A549 (cell line): ENCODE measurements at regions of chr1 and their contacts with region 1.

Region 1: DNA sequence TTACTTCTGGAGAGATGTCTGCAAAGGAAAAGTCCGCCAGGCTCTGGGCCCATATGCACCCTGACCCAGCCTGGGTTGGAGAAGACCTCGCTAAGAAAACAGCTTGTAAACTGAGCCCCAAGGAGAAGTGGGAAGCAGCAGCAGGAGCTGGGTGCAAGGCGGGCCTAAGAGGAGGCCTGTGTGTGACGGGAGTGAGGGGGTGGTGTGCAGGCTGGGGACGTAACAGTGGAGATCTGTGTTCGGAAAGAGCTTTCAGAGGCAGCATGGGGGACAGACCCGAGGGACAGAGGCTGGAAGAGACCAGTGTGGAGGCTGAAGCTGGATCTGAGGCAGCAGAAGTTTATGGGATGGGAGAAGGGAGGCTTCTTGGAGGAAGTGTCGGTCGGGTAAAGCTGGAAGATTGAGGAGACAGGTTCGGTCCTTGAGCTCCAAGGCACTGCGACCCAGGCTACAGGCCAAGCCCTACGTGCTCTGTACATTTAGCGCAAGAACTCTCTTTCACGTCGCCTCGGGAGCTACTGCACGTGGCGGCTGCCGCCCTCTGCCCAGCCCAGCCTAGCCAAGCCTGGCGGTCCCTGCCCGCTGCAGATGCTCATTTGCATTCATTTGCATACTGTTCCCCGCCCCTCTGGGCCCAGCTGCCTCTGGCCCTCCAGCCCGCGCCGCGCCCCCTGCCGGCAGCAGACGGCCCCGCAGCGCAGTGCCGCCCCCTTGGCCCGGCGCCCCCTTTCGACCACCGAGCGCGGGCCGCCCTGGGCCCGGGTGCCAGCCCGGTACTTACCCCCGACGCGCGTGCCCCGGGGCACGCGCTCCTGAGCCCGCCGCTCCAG is 6.3 kb downstream of the HPCA start:
- DNase-seq: peak; percentile 44 to 51
- ATAC-seq: peak; percentile 63 to 85
- H3K4me3 ChIP-seq: peak overlapping the region; percentile 55
- H3K27ac ChIP-seq: peak overlapping the region; percentile 72 to 88
- H3K4me1 ChIP-seq: 0 out of 3 replicates have a peak, but pooled peaks cover 3% of the 10 kb centered on the region
- CTCF ChIP-seq: peak; percentile 75
- EP300 ChIP-seq: no peak
- POLR2A ChIP-seq: no peak
- RAD21 ChIP-seq: no peak

Region 2: DNA sequence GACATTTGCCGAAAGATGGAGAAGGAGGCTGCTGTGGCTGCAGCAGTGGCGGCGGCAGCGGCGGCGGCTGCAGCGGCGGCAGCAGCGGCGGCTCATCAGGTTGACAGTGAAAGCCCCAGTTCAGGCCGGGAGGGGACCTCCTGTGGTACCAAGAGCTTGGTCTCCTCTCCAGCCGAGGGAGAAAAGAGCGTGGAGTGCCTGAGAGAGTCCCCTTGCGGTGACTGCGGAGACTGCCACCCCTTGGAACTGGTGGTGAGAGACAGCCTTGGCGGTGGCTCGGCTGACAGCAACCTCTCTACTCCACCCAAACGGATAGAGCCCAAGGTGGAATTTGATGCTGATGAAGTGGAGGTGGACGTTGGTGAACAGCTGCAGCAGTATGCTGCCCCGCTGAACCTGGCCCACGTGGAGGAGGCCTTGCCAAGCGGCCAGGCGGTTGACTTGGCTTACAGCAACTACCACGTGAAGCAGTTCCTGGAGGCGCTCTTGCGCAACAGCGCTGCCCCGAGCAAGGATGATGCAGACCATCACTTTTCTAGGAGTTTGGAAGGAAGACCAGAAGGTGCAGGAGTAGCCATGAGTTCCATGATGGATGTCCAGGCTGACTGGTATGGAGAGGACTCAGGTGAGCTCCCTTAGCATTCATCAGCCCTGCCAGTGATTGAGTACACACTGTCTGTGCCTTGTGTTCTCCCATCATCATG is 421.4 kb before region 1 on chr1:
- CTCF ChIA-PET with region 1: no interaction called
- POLR2A ChIA-PET with region 1: no interaction called
- DNase-seq: no peak
- ATAC-seq: peak in 1 of 2 experiments; percentile 36; a peak in 2 of 6 replicates
- H3K4me3 ChIP-seq: no peak overlapping the region
- H3K27ac ChIP-seq: no peak overlapping the region
- H3K4me1 ChIP-seq: no peaks in the 10 kb centered on the region
- CTCF ChIP-seq: no peak
- EP300 ChIP-seq: no peak
- POLR2A ChIP-seq: no peak
- RAD21 ChIP-seq: no peak

Region 3: DNA sequence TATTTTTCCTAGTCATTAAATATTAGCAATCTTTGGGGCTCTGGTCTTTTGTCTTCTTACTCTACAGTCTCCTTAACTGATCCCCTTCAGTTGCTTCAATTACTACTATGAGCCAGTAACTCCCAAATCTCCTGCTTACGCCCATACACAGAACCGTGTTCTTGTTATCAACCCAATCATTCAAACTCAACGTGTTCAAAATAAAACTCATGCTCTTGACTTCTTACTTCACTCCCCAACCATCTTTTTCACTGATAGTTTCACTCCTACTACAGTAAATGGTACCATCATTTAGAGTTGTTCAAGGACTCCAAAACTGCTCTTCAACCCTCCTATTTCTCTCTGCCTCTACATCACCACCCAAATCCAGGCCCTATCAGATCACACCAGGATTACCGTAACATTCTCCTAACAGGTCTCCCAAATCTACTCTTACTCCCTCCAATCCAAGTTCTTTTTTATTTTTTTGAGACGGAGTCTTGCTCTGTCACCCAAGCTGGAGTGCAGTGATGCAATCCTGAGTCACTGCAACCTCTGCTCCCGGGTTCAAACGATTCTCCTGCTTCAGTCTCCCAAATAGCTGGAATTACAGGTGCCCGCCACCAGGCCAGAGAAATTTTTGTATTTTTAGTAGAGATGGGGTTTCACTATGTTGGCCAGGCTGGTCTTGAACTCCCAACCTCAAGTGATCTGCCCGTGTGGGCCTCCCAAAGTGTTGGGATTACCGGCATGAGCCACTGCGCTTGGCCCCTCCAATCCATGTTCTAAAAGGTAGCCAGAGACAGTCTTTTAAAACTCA is 78.4 kb before region 1 on chr1:
- CTCF ChIA-PET with region 1: no interaction called
- POLR2A ChIA-PET with region 1: no interaction called
- DNase-seq: peak in 1 of 2 experiments; percentile 7
- ATAC-seq: no peak
- H3K4me3 ChIP-seq: no peak overlapping the region
- H3K27ac ChIP-seq: no peak overlapping the region
- H3K4me1 ChIP-seq: peaks cover 28% of the 10 kb centered on the region
- CTCF ChIP-seq: no peak
- EP300 ChIP-seq: no peak
- POLR2A ChIP-seq: no peak
- RAD21 ChIP-seq: no peak

Region 4: DNA sequence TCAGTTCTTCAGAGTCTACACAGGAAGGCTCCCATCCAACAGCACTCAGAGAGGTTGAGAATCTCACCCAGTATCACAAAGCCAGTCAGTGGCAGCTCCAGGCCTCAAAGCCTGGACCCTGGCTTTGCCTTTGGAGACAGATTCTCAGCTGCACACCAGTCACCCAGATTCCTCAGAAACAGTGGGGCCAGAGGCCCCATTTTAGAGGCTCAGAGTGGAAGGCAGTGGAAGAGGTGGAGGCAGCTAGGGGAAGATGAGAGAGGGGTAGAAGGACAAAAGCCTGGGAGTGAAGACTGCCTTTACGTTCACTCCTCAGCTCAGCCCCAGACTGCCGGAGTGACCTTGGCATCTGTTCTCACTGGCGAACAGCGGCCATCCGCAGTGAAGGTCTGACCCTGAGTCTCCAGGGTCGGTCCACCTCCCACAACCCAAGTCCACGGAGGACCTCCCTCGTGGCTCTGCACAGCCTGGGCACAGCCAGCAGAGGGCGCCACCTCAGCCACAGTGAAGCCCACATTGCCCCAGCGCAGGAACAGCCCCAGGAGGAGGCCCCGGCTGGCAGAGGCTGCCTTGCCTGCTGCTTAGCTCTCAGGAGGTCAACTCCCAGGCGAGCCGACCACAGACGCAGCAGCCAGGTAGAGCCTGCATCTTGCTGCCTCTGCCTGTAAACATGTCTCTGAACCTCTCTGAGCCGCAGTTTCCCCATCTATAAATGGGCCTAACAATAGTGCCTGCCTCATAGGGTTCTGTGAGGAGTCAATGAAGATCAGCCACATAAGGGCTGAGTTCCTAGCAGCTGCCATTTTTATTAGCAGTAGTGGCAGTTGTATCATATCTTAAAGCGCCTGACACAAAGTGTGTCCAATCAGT is 16.0 kb before region 1 on chr1:
- CTCF ChIA-PET with region 1: interaction called, 12 read pairs
- POLR2A ChIA-PET with region 1: no interaction called
- DNase-seq: peak; percentile 34 to 54
- ATAC-seq: peak; percentile 64 to 85
- H3K4me3 ChIP-seq: no peak overlapping the region
- H3K27ac ChIP-seq: no peak overlapping the region
- H3K4me1 ChIP-seq: no peaks in the 10 kb centered on the region
- CTCF ChIP-seq: peak; percentile 52
- EP300 ChIP-seq: no peak
- POLR2A ChIP-seq: no peak
- RAD21 ChIP-seq: peak; percentile 43 to 55; a peak in 4 of 5 replicates

Region 5: GRCh38 chr1:32907439-32907838 is 14.9 kb after region 1 on chr1:
- CTCF ChIA-PET with region 1: interaction called, 15 read pairs
- POLR2A ChIA-PET with region 1: no interaction called
- DNase-seq: no peak
- ATAC-seq: no peak
- H3K4me3 ChIP-seq: no peak overlapping the region
- H3K27ac ChIP-seq: no peak overlapping the region
- H3K4me1 ChIP-seq: peaks cover 19% of the 10 kb centered on the region
- CTCF ChIP-seq: no peak
- EP300 ChIP-seq: no peak
- POLR2A ChIP-seq: no peak
- RAD21 ChIP-seq: no peak